ENCODE measurements at regions of chr9 and their contacts with region 1.

Region 1: DNA sequence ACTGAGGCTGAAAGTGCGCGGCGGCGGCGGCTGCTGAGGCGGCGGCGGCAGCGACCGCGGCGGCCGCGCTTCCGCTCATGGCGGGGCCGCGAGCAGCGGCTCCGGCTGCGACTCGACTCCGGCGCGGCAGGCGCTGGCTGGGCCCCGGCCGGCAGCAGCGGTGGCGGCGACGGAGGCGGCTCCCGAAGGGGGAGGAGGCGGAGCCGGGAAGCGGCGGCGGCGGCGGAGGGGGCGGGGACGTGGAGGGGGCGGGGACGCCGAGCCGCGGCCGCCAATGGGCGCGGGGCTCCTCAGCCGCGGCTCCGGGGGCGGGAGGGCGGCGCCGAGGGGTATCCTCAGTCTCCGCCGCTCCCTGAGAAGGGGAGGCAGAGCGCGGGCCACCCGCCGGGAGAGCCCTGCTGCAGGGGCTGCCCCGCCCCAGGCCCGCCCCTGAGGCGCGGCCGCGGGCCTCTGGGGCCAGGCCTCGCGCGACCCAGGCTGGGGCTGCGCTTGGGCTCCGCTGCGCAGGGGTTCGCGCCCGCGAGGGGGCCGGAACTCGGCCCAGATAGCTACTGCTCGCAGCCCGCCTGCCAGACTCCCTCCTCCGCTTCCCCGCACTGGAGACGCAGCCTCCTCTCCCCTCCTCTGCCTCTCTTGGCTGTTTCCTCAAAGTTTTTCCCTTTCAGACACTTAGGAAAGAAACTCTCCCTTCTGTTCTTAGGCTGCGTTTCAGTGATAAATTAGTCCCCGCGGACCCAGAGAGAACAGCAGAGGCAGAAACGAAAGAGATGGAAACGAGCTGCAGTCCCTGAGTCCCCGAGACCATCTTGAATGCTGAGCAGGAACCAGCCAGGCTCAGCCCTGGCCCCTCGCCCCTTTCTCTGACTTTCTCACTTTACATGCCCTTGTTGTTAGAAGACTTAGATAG is 85.0 kb upstream of the MELK start:
- DNase-seq: peak; percentile 87
- H3K4me3 ChIP-seq: peak overlapping the region; percentile 84 to 95
- H3K27ac ChIP-seq: peak overlapping the region; percentile 91 to 92
- H3K4me1 ChIP-seq: no peaks in the 10 kb centered on the region
- H3K27me3 ChIP-seq: no peaks in the 10 kb centered on the region
- CTCF ChIP-seq: peak in 2 of 4 experiments; percentile 38 to 46
- POLR2A ChIP-seq: peak; percentile 84

Region 2: GRCh38 chr9:36400332-36401163 is 87.2 kb before region 1 on chr9:
- intact Hi-C with region 1: loop called (anchors 5 kb)
- DNase-seq: peak; percentile 87
- H3K4me3 ChIP-seq: peak overlapping the region; percentile 79 to 82
- H3K27ac ChIP-seq: peak overlapping the region; percentile 97 to 98
- H3K4me1 ChIP-seq: peaks cover 4% of the 10 kb centered on the region
- H3K27me3 ChIP-seq: no peaks in the 10 kb centered on the region
- CTCF ChIP-seq: peak in 2 of 4 experiments; percentile 25 to 44
- POLR2A ChIP-seq: peak; percentile 52